Naive thymus-derived CD4-positive, alpha-beta T cell (primary cell): ENCODE measurements at regions of chr1 and their contacts with region 1.

Region 1: GRCh38 chr1:214602764-214603657 is at the start of gene CENPF:
- DNase-seq: peak; percentile 79 to 96 (median 94)
- ATAC-seq: peak; percentile 99
- H3K4me3 ChIP-seq: peak within 1 kb of the TSS; percentile 60
- H3K4me3 Mint-ChIP-seq: peak within 1 kb of the TSS; percentile 86 to 97 (median 92)
- H3K27ac ChIP-seq: peak within 1 kb of the TSS; percentile 48
- H3K27ac Mint-ChIP-seq: peak within 1 kb of the TSS; percentile 52 to 98 (median 87)
- H3K4me1 ChIP-seq: peaks cover 0 to 6% of the 10 kb centered on the region in 2 donors
- H3K4me1 Mint-ChIP-seq: peaks cover 6 to 29% (median 24%) of the 10 kb centered on the region in 7 donors
- H3K27me3 ChIP-seq: no peaks in the 10 kb centered on the region
- H3K27me3 Mint-ChIP-seq: peaks cover 0 to 2% (median 0%) of the 10 kb centered on the region in 5 donors
- total RNA-seq, gene CENPF: 2.1 to 79.9 (median 4.1) TPM

Region 2: GRCh38 chr1:214584805-214585766 is 17.9 kb before region 1 on chr1:
- CTCF ChIA-PET with region 1: no interaction called
- POLR2A ChIA-PET with region 1: no interaction called
- intact Hi-C with region 1: no loop called
- DNase-seq: peak in 3 of 9 donors; percentile 9 to 12 (median 10)
- ATAC-seq: peak; percentile 45
- H3K4me3 ChIP-seq: no peak overlapping the region
- H3K4me3 Mint-ChIP-seq: no peak overlapping the region
- H3K27ac ChIP-seq: no peak overlapping the region
- H3K27ac Mint-ChIP-seq: no peak overlapping the region
- H3K4me1 ChIP-seq: no peaks in the 10 kb centered on the region
- H3K4me1 Mint-ChIP-seq: peaks cover 0 to 4% (median 0%) of the 10 kb centered on the region in 7 donors
- H3K27me3 ChIP-seq: no peaks in the 10 kb centered on the region
- H3K27me3 Mint-ChIP-seq: peaks cover 0 to 12% (median 4%) of the 10 kb centered on the region in 5 donors

Region 3: GRCh38 chr1:214747050-214747615 is 144.1 kb after region 1 on chr1:
- CTCF ChIA-PET with region 1: no interaction called
- POLR2A ChIA-PET with region 1: no interaction called
- intact Hi-C with region 1: no loop called
- DNase-seq: no peak
- ATAC-seq: no peak
- H3K4me3 ChIP-seq: no peak overlapping the region
- H3K4me3 Mint-ChIP-seq: no peak overlapping the region
- H3K27ac ChIP-seq: no peak overlapping the region
- H3K27ac Mint-ChIP-seq: no peak overlapping the region
- H3K4me1 ChIP-seq: no peaks in the 10 kb centered on the region
- H3K4me1 Mint-ChIP-seq: peaks cover 0 to 14% (median 0%) of the 10 kb centered on the region in 7 donors
- H3K27me3 ChIP-seq: no peaks in the 10 kb centered on the region
- H3K27me3 Mint-ChIP-seq: no peaks in the 10 kb centered on the region

Region 4: GRCh38 chr1:215566556-215567490 is 963.8 kb after region 1 on chr1 and contains the start of gene KCTD3:
- CTCF ChIA-PET with region 1: no interaction called
- POLR2A ChIA-PET with region 1: no interaction called
- intact Hi-C with region 1: loop called in 1 of 2 experiments (anchors 1 kb)
- DNase-seq: peak; percentile 8 to 54 (median 24)
- ATAC-seq: peak; percentile 67
- H3K4me3 ChIP-seq: peak within 1 kb of the TSS; percentile 68
- H3K4me3 Mint-ChIP-seq: peak within 1 kb of the TSS; percentile 87 to 98 (median 95)
- H3K27ac ChIP-seq: peak within 1 kb of the TSS; percentile 23
- H3K27ac Mint-ChIP-seq: peak within 1 kb of the TSS; percentile 43 to 95 (median 84)
- H3K4me1 ChIP-seq: peaks cover 0 to 7% of the 10 kb centered on the region in 2 donors
- H3K4me1 Mint-ChIP-seq: peaks cover 8 to 39% (median 24%) of the 10 kb centered on the region in 7 donors
- H3K27me3 ChIP-seq: no peaks in the 10 kb centered on the region
- H3K27me3 Mint-ChIP-seq: peaks cover 6 to 24% (median 13%) of the 10 kb centered on the region in 5 donors
- total RNA-seq, gene KCTD3: 3.5 to 7.4 (median 5.4) TPM